BJ (cell line): ENCODE measurements at regions of chr3 and their contacts with region 1.

Region 1: DNA sequence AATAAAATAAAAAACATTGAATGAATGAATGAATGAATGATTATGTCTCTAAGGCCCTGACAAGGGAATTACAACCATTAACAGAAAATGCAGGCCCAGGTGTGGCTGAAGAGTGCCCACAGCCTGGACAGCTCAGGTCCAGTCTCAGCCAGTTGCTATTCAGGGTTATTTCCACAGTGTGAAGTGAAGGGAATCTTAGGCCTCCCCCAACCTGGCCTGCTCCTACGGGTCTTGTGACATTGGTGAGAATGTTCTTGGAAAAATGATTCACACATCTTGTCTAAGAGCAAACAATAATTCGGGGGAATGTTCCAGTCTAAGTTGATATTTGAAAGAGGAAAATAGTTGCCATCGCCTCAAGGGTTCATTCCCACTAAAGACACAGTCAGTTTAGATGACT is 37.0 kb downstream of the MINDY4B start:
- DNase-seq: no peak
- H3K4me3 ChIP-seq: no peak overlapping the region
- H3K27me3 ChIP-seq: no peaks in the 10 kb centered on the region; the same call in 1 of the 2 replicates
- CTCF ChIP-seq: no peak

Region 2: GRCh38 chr3:150739877-150740645 is 128.2 kb before region 1 on chr3:
- CTCF ChIA-PET with region 1: no interaction called
- POLR2A ChIA-PET with region 1: no interaction called
- DNase-seq: no peak
- H3K4me3 ChIP-seq: no peak overlapping the region
- H3K27me3 ChIP-seq: no peaks in the 10 kb centered on the region
- CTCF ChIP-seq: no peak

Region 3: DNA sequence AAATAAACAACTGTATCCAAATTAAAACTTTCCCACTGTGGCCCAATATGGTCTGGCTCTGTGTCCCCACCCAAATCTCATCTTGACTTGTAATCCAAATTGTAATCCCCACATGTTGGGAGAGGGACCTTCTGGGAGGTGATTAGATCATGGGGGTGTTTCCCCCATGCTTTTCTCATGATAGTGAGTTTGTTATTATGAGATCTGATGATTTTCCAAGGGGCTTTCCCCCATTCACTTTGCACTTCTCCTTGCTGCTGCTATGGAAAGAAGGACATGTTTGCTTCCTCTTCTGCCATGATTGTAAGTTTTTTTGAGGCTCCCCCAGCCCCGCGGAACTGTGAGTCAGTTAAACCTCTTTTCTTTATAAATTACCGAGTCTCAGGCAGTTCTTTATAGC is 18.1 kb before region 1 on chr3:
- CTCF ChIA-PET with region 1: interaction called, 11 read pairs
- POLR2A ChIA-PET with region 1: no interaction called
- DNase-seq: no peak
- H3K4me3 ChIP-seq: no peak overlapping the region
- H3K27me3 ChIP-seq: no peaks in the 10 kb centered on the region; the same call in 1 of the 2 replicates
- CTCF ChIP-seq: no peak

Region 4: GRCh38 chr3:150996731-150997130 is 128.4 kb after region 1 on chr3:
- CTCF ChIA-PET with region 1: no interaction called
- POLR2A ChIA-PET with region 1: no interaction called
- DNase-seq: no peak
- H3K4me3 ChIP-seq: no peak overlapping the region
- H3K27me3 ChIP-seq: peaks cover 1% of the 10 kb centered on the region; the same call in 1 of the 2 replicates
- CTCF ChIP-seq: no peak